Posterior vena cava (tissue), 2 donors: ENCODE measurements at regions of chr11 and their contacts with region 1.

Region 1: DNA sequence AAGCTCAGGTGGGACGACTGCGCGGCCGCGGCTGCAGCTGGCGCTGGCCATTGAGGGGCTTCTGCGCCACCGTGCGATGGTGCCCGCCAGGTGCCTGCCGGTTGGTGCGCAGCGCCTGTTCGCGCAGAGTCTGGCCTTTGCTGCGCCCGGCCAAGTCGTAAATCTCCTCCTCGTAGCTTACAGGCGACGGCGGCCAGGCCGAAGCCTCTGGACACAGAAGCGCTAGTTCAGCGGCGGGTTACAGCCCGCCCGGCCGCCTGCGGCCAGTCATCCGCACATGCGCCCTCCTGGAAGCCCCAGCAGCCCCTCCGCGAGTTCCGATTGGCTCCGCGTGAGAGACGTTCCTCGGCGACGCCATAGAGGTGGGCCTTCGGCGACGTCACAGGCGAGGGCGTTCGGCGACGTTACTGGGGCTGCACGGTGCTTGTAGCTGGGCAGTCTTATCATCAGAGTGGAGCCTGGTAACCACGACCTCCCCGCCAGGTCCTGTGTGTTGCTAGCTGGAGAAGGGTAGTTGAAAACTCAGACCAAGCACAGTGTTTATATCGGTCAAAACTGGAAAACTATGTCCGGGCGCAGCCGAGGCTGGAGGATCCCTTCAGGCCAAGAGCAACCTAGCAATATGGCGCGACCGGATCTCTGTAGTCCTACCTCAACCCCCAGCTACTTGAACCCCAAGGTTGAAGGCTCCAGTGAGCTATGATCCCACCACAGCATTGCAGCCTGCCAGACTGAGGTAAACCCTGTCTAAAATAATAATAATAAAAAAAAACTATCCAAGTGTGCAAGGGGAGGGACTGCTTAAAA is 265.7 kb downstream of the OR4C45 start:
- DNase-seq: no peak

Region 2: GRCh38 chr11:50247309-50247874 is 51.0 kb before region 1 on chr11:
- intact Hi-C with region 1: loop called in 1 of 2 experiments (anchors 10 kb)
- DNase-seq: no peak